Activated CD4-positive, alpha-beta T cell treated with anti-CD3 and anti-CD28 coated beads, Interleukin-2, amount 10 ng/mL, durations not matched to agents 24 days and 14 days (primary cell): ENCODE measurements at regions of chr5 and their contacts with region 1.

Region 1: GRCh38 chr5:96807075-96807654 is 580 bp downstream of the ERAP1 start:
- DNase-seq: peak; percentile 86
- H3K4me3 Mint-ChIP-seq: peak overlapping the region; percentile 90
- H3K27ac Mint-ChIP-seq: peak overlapping the region; percentile 94
- H3K4me1 Mint-ChIP-seq: peaks cover 60% of the 10 kb centered on the region
- H3K27me3 Mint-ChIP-seq: no peaks in the 10 kb centered on the region

Region 2: GRCh38 chr5:96662725-96663513 is 144.2 kb before region 1 on chr5:
- intact Hi-C with region 1: loop called (anchors 5 kb)
- DNase-seq: peak; percentile 96
- H3K4me3 Mint-ChIP-seq: peak overlapping the region; percentile 99
- H3K27ac Mint-ChIP-seq: peak overlapping the region; percentile 99
- H3K4me1 Mint-ChIP-seq: peaks cover 49% of the 10 kb centered on the region
- H3K27me3 Mint-ChIP-seq: peaks cover 12% of the 10 kb centered on the region

Region 3: DNA sequence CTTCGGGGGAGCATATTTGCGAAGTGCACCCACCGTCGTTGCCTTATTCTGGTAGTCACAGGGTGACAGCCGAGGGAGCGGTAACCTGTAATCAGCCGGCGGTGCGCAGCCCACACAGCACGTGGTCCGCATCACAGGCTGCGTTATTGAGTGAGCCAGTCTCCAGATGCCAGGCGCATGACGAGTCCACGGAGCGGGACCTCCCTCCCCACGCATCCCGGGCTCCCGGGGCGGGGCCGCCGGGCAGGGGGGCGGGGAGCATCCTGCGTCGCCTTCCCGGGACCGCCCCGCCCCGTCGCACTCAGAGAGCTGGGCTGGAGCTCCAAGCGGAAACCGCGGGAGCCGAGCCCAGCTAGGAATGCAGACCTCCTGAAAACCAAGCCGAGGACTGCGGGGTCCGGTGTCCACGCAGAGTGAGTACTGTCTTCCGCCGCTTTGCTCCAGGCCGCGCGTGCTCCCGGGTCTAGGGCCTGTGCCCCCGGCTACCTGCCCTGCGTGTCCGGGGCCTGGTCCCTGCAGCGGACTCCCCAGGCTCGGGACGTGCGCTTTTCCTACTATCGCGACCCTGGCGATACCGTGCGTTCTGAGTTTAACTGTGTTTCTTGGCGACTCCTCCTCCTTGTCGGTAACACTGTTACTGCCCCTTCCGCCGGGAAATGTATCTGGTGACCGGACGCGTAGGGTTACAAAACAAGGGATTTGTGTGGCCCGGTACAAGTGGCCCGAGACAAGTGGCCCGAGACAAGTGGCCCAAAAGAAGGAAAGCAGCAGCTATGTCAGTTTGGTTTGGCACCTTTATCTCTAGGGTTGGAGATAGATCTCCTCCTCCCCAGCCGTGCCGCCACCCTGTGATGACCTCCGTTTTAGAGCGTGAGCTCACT is 104.4 kb before region 1 on chr5:
- intact Hi-C with region 1: loop called (anchors 5 kb)
- DNase-seq: peak; percentile 92
- H3K4me3 Mint-ChIP-seq: peak overlapping the region; percentile 93
- H3K27ac Mint-ChIP-seq: peak overlapping the region; percentile 88
- H3K4me1 Mint-ChIP-seq: peaks cover 30% of the 10 kb centered on the region
- H3K27me3 Mint-ChIP-seq: no peaks in the 10 kb centered on the region

Region 4: GRCh38 chr5:96876292-96876850 is 69.2 kb after region 1 on chr5 and contains the start of gene ERAP2:
- intact Hi-C with region 1: loop called (anchors 1 kb)
- DNase-seq: peak; percentile 77
- H3K4me3 Mint-ChIP-seq: peak within 1 kb of the TSS; percentile 96
- H3K27ac Mint-ChIP-seq: peak within 1 kb of the TSS; percentile 98
- H3K4me1 Mint-ChIP-seq: peaks cover 62% of the 10 kb centered on the region
- H3K27me3 Mint-ChIP-seq: no peaks in the 10 kb centered on the region
- total RNA-seq, gene ERAP2: 48.9 and 51.3 TPM in 2 replicates

Region 5: DNA sequence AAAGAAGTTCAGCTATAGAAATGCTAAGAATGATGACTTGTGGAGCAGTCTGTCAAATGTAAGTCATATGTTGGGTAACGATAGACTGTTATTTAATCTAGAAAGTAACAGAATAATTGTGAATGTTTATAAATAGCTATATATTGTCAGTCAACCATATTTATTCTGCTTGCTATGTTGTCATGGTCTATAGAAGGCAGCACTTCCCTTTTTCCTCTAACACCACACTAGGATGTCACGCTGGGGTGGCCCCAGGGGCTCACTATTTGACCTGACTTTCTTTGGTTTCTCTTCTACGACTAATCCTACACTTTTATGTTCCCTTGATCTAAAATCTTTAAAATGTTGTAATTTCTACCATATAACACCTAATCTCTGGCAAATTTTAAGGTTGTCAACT is 89.6 kb after region 1 on chr5:
- intact Hi-C with region 1: loop called (anchors 1 kb)
- DNase-seq: peak; percentile 60
- H3K4me3 Mint-ChIP-seq: peak overlapping the region; percentile 84
- H3K27ac Mint-ChIP-seq: peak overlapping the region; percentile 94
- H3K4me1 Mint-ChIP-seq: peaks cover 51% of the 10 kb centered on the region
- H3K27me3 Mint-ChIP-seq: no peaks in the 10 kb centered on the region

Region 6: GRCh38 chr5:97162045-97162444 is 354.9 kb after region 1 on chr5:
- intact Hi-C with region 1: loop called (anchors 2 kb)
- DNase-seq: peak; percentile 87
- H3K4me3 Mint-ChIP-seq: no peak overlapping the region
- H3K27ac Mint-ChIP-seq: no peak overlapping the region
- H3K4me1 Mint-ChIP-seq: peaks cover 5% of the 10 kb centered on the region
- H3K27me3 Mint-ChIP-seq: no peaks in the 10 kb centered on the region

Region 7: GRCh38 chr5:97183100-97183929 is 376.1 kb after region 1 on chr5 and contains the start of gene RIOK2:
- intact Hi-C with region 1: loop called (anchors 2 kb)
- DNase-seq: peak; percentile 97
- H3K4me3 Mint-ChIP-seq: peak within 1 kb of the TSS; percentile 89
- H3K27ac Mint-ChIP-seq: peak within 1 kb of the TSS; percentile 100
- H3K4me1 Mint-ChIP-seq: peaks cover 24% of the 10 kb centered on the region
- H3K27me3 Mint-ChIP-seq: peaks cover 4% of the 10 kb centered on the region
- total RNA-seq, gene RIOK2: 40.8 and 42.0 TPM in 2 replicates